T-cell (primary cell): ENCODE measurements at regions of chr3 and their contacts with region 1.

Region 1: GRCh38 chr3:192687488-192688152 is 39.7 kb downstream of the FGF12 start:
- DNase-seq: no peak
- ATAC-seq: no peak
- H3K4me3 ChIP-seq: no peak overlapping the region
- H3K4me3 Mint-ChIP-seq: no peak overlapping the region
- H3K27ac ChIP-seq: no peak overlapping the region
- H3K27ac Mint-ChIP-seq: no peak overlapping the region
- H3K4me1 ChIP-seq: no peaks in the 10 kb centered on the region
- H3K4me1 Mint-ChIP-seq: no peaks in the 10 kb centered on the region
- H3K27me3 ChIP-seq: peaks cover 0 to 5% of the 10 kb centered on the region in 2 experiments
- H3K27me3 Mint-ChIP-seq: peaks cover 0 to 4% of the 10 kb centered on the region in 2 donors

Region 2: GRCh38 chr3:192655040-192655439 is 32.6 kb before region 1 on chr3:
- CTCF ChIA-PET with region 1: no interaction called
- POLR2A ChIA-PET with region 1: no interaction called
- DNase-seq: no peak
- ATAC-seq: no peak
- H3K4me3 ChIP-seq: no peak overlapping the region
- H3K4me3 Mint-ChIP-seq: no peak overlapping the region
- H3K27ac ChIP-seq: no peak overlapping the region
- H3K27ac Mint-ChIP-seq: no peak overlapping the region
- H3K4me1 ChIP-seq: no peaks in the 10 kb centered on the region
- H3K4me1 Mint-ChIP-seq: no peaks in the 10 kb centered on the region
- H3K27me3 ChIP-seq: no peaks in the 10 kb centered on the region
- H3K27me3 Mint-ChIP-seq: peaks cover 0 to 2% of the 10 kb centered on the region in 2 donors

Region 3: GRCh38 chr3:192758654-192759053 is 71.0 kb after region 1 on chr3:
- CTCF ChIA-PET with region 1: no interaction called
- POLR2A ChIA-PET with region 1: interaction called in 1 of 2 experiments, 14 read pairs
- DNase-seq: no peak
- ATAC-seq: no peak
- H3K4me3 ChIP-seq: no peak overlapping the region
- H3K4me3 Mint-ChIP-seq: no peak overlapping the region
- H3K27ac ChIP-seq: no peak overlapping the region
- H3K27ac Mint-ChIP-seq: no peak overlapping the region
- H3K4me1 ChIP-seq: no peaks in the 10 kb centered on the region
- H3K4me1 Mint-ChIP-seq: no peaks in the 10 kb centered on the region
- H3K27me3 ChIP-seq: peaks cover 0 to 9% of the 10 kb centered on the region in 2 experiments
- H3K27me3 Mint-ChIP-seq: peaks cover 5 to 10% of the 10 kb centered on the region in 2 donors